PC-3 (cell line): ENCODE measurements at regions of chr3 and their contacts with region 1.

Region 1: GRCh38 chr3:152159328-152159727 is 109.4 kb upstream of the MBNL1 start:
- DNase-seq: peak; percentile 93
- ATAC-seq: peak; percentile 99
- H3K4me3 ChIP-seq: peak overlapping the region; percentile 7; the same call in 1 of the 2 replicates
- H3K27ac ChIP-seq: peak overlapping the region; percentile 29
- H3K4me1 ChIP-seq: peaks cover 23% of the 10 kb centered on the region
- H3K27me3 ChIP-seq: no peaks in the 10 kb centered on the region
- CTCF ChIP-seq: no peak

Region 2: GRCh38 chr3:151770956-151771355 is 388.4 kb before region 1 on chr3:
- CTCF ChIA-PET with region 1: no interaction called
- POLR2A ChIA-PET with region 1: interaction called, 13 read pairs
- intact Hi-C with region 1: no loop called
- DNase-seq: peak; percentile 21
- ATAC-seq: 0 out of 2 replicates have a peak, but pooled peaks have one; percentile 5
- H3K4me3 ChIP-seq: no peak overlapping the region
- H3K27ac ChIP-seq: peak overlapping the region; percentile 88
- H3K4me1 ChIP-seq: peaks cover 38% of the 10 kb centered on the region
- H3K27me3 ChIP-seq: no peaks in the 10 kb centered on the region
- CTCF ChIP-seq: no peak

Region 3: DNA sequence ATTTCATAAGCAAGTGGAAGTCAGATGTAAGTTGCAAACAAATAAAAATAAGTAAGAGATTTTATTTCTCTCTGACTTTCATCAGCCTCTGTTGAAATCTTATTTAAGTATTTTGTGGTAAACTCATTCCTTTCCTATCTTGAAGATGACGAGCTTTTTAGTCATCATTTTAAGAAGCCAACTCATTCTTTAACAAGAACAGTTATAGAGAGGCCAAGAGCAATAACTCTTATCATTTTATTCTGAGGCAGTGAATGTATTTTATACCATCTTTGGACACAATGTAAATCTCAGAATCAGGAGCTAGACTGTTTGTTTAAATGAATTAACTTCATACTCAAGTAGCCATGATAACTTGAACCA is 38.1 kb before region 1 on chr3:
- CTCF ChIA-PET with region 1: interaction called, 3 read pairs
- POLR2A ChIA-PET with region 1: no interaction called
- intact Hi-C with region 1: loop called (anchors 5 kb)
- DNase-seq: peak; percentile 91
- ATAC-seq: peak; percentile 91
- H3K4me3 ChIP-seq: no peak overlapping the region
- H3K27ac ChIP-seq: peak overlapping the region; percentile 65
- H3K4me1 ChIP-seq: peaks cover 27% of the 10 kb centered on the region
- H3K27me3 ChIP-seq: no peaks in the 10 kb centered on the region
- CTCF ChIP-seq: no peak

Region 4: GRCh38 chr3:152139651-152140050 is 19.7 kb before region 1 on chr3:
- CTCF ChIA-PET with region 1: no interaction called
- POLR2A ChIA-PET with region 1: interaction called, 10 read pairs
- intact Hi-C with region 1: loop called (anchors 1 kb)
- DNase-seq: no peak
- ATAC-seq: no peak
- H3K4me3 ChIP-seq: no peak overlapping the region
- H3K27ac ChIP-seq: no peak overlapping the region
- H3K4me1 ChIP-seq: no peaks in the 10 kb centered on the region
- H3K27me3 ChIP-seq: no peaks in the 10 kb centered on the region
- CTCF ChIP-seq: no peak

Region 5: DNA sequence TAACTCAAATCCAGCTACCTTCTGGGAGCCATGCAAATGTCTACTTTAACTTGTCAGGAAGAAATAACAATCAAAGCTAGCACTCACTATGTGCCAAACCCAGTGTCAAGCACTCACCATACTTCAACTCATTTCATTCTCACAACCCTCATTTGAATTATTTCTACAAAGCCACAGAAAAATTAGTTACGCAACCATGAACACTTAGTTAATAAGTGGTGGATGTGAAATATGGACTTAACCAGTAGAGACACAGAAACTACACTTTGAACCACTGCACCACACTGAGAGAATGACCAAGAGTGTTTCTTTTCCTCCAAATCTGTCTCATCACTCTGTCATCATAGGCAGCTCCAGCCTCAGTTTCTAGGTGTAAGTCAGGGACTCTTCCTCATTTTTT is 18.4 kb after region 1 on chr3:
- CTCF ChIA-PET with region 1: no interaction called
- POLR2A ChIA-PET with region 1: interaction called, 8 read pairs
- intact Hi-C with region 1: loop called (anchors 1 kb)
- DNase-seq: no peak
- ATAC-seq: no peak
- H3K4me3 ChIP-seq: no peak overlapping the region
- H3K27ac ChIP-seq: no peak overlapping the region
- H3K4me1 ChIP-seq: peaks cover 28% of the 10 kb centered on the region
- H3K27me3 ChIP-seq: no peaks in the 10 kb centered on the region
- CTCF ChIP-seq: no peak

Region 6: GRCh38 chr3:152428577-152428976 is 269.2 kb after region 1 on chr3:
- CTCF ChIA-PET with region 1: no interaction called
- POLR2A ChIA-PET with region 1: no interaction called
- intact Hi-C with region 1: no loop called
- DNase-seq: no peak
- ATAC-seq: no peak
- H3K4me3 ChIP-seq: no peak overlapping the region
- H3K27ac ChIP-seq: no peak overlapping the region
- H3K4me1 ChIP-seq: 0 out of 2 replicates have a peak, but pooled peaks cover 8% of the 10 kb centered on the region
- H3K27me3 ChIP-seq: no peaks in the 10 kb centered on the region
- CTCF ChIP-seq: no peak